Activated B cell treated with CpG ODN at 0.5 μM for 24 hours (primary cell): ENCODE measurements at regions of chr4 and their contacts with region 1.

Region 1: DNA sequence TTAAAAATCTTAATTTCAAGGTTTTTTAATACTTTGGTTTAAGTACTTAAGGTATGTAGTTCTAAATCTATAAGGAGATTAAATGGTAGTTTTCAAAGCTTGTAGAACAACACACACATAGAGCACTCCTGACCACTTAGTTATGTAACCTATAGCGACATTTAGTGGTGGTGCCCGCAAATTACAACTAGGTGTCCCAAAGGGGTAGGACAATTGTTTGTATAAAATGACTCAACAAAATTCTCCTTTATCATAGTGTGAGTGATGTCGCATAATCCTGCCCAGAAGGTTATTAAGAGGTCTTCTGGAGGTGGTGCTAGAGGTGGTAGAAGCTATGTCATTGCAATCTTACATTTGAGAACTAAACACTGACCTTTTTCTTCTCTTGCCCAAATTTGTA is 373.0 kb upstream of the RASGEF1B start:
- DNase-seq: peak; percentile 33
- ATAC-seq: peak; percentile 98
- H3K4me3 Mint-ChIP-seq: no peak overlapping the region
- H3K27ac Mint-ChIP-seq: no peak overlapping the region
- H3K4me1 Mint-ChIP-seq: peaks cover 4% of the 10 kb centered on the region
- H3K27me3 Mint-ChIP-seq: no peaks in the 10 kb centered on the region
- CTCF ChIP-seq: peak; percentile 69

Region 2: DNA sequence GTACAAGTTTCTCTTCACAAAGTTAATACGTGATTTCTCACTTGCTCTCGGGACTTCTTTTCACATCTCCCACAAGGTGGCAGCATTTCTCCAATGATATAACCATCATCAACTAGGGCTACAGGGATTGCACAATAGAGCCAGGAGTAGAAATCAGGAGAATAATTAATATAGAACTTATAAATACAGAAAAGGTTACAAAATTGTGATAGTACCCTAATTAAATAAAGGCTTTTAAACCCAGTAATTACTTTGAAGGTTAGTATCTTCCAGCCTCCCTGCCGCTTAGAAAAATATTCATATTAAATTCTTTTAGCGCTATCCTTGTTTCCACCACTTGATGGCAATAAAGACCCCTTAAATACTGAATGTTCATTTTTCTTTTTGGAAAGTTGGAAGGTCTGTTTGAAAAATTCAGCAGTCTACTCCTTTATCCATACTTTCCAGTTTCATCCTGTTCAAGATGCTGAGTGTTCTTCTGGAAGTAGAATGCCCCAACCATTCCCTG is 438.8 kb before region 1 on chr4:
- CTCF ChIA-PET with region 1: interaction called, 24 read pairs
- POLR2A ChIA-PET with region 1: no interaction called
- intact Hi-C with region 1: loop called (anchors 1 kb)
- DNase-seq: no peak
- ATAC-seq: peak; percentile 81
- H3K4me3 Mint-ChIP-seq: no peak overlapping the region
- H3K27ac Mint-ChIP-seq: no peak overlapping the region
- H3K4me1 Mint-ChIP-seq: peaks cover 3% of the 10 kb centered on the region
- H3K27me3 Mint-ChIP-seq: peaks cover 3% of the 10 kb centered on the region
- CTCF ChIP-seq: peak; percentile 93

Region 3: GRCh38 chr4:81565142-81565870 is 279.4 kb before region 1 on chr4:
- CTCF ChIA-PET with region 1: interaction called, 3 read pairs
- POLR2A ChIA-PET with region 1: no interaction called
- intact Hi-C with region 1: loop called (anchors 2 kb)
- DNase-seq: no peak
- ATAC-seq: no peak
- H3K4me3 Mint-ChIP-seq: peak overlapping the region; percentile 44
- H3K27ac Mint-ChIP-seq: peak overlapping the region; percentile 69
- H3K4me1 Mint-ChIP-seq: peaks cover 69% of the 10 kb centered on the region
- H3K27me3 Mint-ChIP-seq: no peaks in the 10 kb centered on the region
- CTCF ChIP-seq: no peak

Region 4: GRCh38 chr4:81688085-81688484 is 156.6 kb before region 1 on chr4:
- CTCF ChIA-PET with region 1: interaction called, 11 read pairs
- POLR2A ChIA-PET with region 1: no interaction called
- intact Hi-C with region 1: no loop called
- DNase-seq: no peak
- ATAC-seq: no peak
- H3K4me3 Mint-ChIP-seq: no peak overlapping the region
- H3K27ac Mint-ChIP-seq: no peak overlapping the region
- H3K4me1 Mint-ChIP-seq: peaks cover 13% of the 10 kb centered on the region
- H3K27me3 Mint-ChIP-seq: no peaks in the 10 kb centered on the region
- CTCF ChIP-seq: no peak

Region 5: GRCh38 chr4:81919238-81919637 is 74.5 kb after region 1 on chr4:
- CTCF ChIA-PET with region 1: interaction called, 5 read pairs
- POLR2A ChIA-PET with region 1: no interaction called
- intact Hi-C with region 1: loop called (anchors 2 kb)
- DNase-seq: no peak
- ATAC-seq: peak; percentile 72
- H3K4me3 Mint-ChIP-seq: no peak overlapping the region
- H3K27ac Mint-ChIP-seq: no peak overlapping the region
- H3K4me1 Mint-ChIP-seq: no peaks in the 10 kb centered on the region
- H3K27me3 Mint-ChIP-seq: peaks cover 9% of the 10 kb centered on the region
- CTCF ChIP-seq: no peak

Region 6: GRCh38 chr4:82284858-82285805 is 440.4 kb after region 1 on chr4:
- CTCF ChIA-PET with region 1: interaction called, 3 read pairs
- POLR2A ChIA-PET with region 1: no interaction called
- intact Hi-C with region 1: loop called (anchors 5 kb)
- DNase-seq: peak; percentile 100
- ATAC-seq: peak; percentile 92
- H3K4me3 Mint-ChIP-seq: peak overlapping the region; percentile 83
- H3K27ac Mint-ChIP-seq: peak overlapping the region; percentile 77
- H3K4me1 Mint-ChIP-seq: peaks cover 21% of the 10 kb centered on the region
- H3K27me3 Mint-ChIP-seq: no peaks in the 10 kb centered on the region
- CTCF ChIP-seq: peak; percentile 97